Heart left ventricle (tissue), 16 donors: ENCODE measurements at regions of chr1 and their contacts with region 1.

Region 1: GRCh38 chr1:219405531-219406331 is 207.2 kb downstream of the ZC3H11B start:
- DNase-seq: no peak
- ATAC-seq: no peak
- H3K4me3 ChIP-seq: no peak overlapping the region
- H3K27ac ChIP-seq: no peak overlapping the region
- H3K4me1 ChIP-seq: no peaks in the 10 kb centered on the region
- H3K27me3 ChIP-seq: no peaks in the 10 kb centered on the region
- CTCF ChIP-seq: no peak
- POLR2A ChIP-seq: no peak

Region 2: GRCh38 chr1:219209578-219209977 is 196.2 kb before region 1 on chr1:
- intact Hi-C with region 1: loop called in 2 of 10 experiments (anchors 10 kb)
- DNase-seq: no peak
- ATAC-seq: peak in 3 of 4 donors; percentile 68 to 81 (median 80)
- H3K4me3 ChIP-seq: no peak overlapping the region
- H3K27ac ChIP-seq: peak overlapping the region in 1 of 12 donors; percentile 25
- H3K4me1 ChIP-seq: peaks cover 0 to under 1% (median 0%) of the 10 kb centered on the region in 12 donors
- H3K27me3 ChIP-seq: no peaks in the 10 kb centered on the region
- CTCF ChIP-seq: no peak
- POLR2A ChIP-seq: no peak

Region 3: DNA sequence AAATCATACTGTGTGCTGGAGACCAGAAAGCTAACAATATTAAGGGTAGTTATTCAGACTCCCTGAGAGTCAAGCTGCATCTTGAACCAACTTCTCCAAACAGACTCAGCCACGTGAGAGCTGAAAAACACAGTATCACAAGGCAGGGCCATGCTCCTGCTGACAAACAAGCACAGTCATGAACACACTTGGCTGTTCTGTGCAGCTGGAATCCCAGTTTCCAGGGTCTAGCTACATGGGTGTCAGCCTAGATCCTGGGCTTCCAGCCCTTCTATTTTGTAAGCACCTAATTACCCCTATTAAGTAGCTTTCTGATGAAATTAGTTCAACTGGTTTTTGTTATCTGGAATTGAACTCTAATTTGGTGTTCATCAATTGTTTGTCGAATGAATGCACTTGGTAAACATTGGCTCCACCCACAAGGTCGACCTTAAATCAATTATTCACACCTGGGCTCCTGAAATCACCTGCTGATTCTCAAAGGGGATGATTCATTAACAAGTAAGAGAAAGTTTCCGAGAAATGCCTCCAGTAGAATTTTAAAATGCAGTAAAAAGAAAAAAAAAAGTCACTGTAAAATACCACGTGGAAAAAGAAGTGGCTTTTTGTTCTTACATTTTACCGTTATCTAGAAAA is 27.9 kb after region 1 on chr1:
- intact Hi-C with region 1: no loop called
- DNase-seq: no peak
- ATAC-seq: peak in 3 of 4 donors; percentile 22 to 40 (median 29)
- H3K4me3 ChIP-seq: no peak overlapping the region
- H3K27ac ChIP-seq: peak overlapping the region in 1 of 12 donors; percentile 25
- H3K4me1 ChIP-seq: peaks cover 0 to 14% (median 5%) of the 10 kb centered on the region in 12 donors
- H3K27me3 ChIP-seq: no peaks in the 10 kb centered on the region
- CTCF ChIP-seq: no peak
- POLR2A ChIP-seq: no peak

Region 4: GRCh38 chr1:219582296-219582695 is 176.6 kb after region 1 on chr1:
- intact Hi-C with region 1: no loop called
- DNase-seq: no peak
- ATAC-seq: peak in 3 of 4 donors; percentile 46 to 69 (median 59)
- H3K4me3 ChIP-seq: no peak overlapping the region
- H3K27ac ChIP-seq: peak overlapping the region in 2 of 12 donors; percentile 19 to 23
- H3K4me1 ChIP-seq: peaks cover 0 to 27% (median 7%) of the 10 kb centered on the region in 12 donors
- H3K27me3 ChIP-seq: no peaks in the 10 kb centered on the region
- CTCF ChIP-seq: no peak
- POLR2A ChIP-seq: no peak